Adrenal gland (tissue), 19 donors: ENCODE measurements at regions of chr13 and their contacts with region 1.

Region 1: GRCh38 chr13:44508562-44509077 is 67.5 kb downstream of the TSC22D1 start:
- DNase-seq: no peak
- H3K4me3 ChIP-seq: no peak overlapping the region
- H3K27ac ChIP-seq: no peak overlapping the region
- H3K4me1 ChIP-seq: no peaks in the 10 kb centered on the region
- H3K27me3 ChIP-seq: no peaks in the 10 kb centered on the region
- CTCF ChIP-seq: no peak
- POLR2A ChIP-seq: no peak

Region 2: GRCh38 chr13:44565881-44566280 is 57.3 kb after region 1 on chr13:
- intact Hi-C with region 1: loop called in 1 of 2 experiments (anchors 10 kb)
- DNase-seq: no peak
- H3K4me3 ChIP-seq: no peak overlapping the region
- H3K27ac ChIP-seq: no peak overlapping the region
- H3K4me1 ChIP-seq: peaks cover 0 to 4% of the 10 kb centered on the region in 2 donors
- H3K27me3 ChIP-seq: no peaks in the 10 kb centered on the region
- CTCF ChIP-seq: no peak
- POLR2A ChIP-seq: no peak